PC-9 (cell line): ENCODE measurements at regions of chr11 and their contacts with region 1.

Region 1: GRCh38 chr11:44326615-44327475 is 16.9 kb upstream of the ALX4 start:
- DNase-seq: peak in 1 of 2 experiments; percentile 15
- H3K4me3 ChIP-seq: no peak overlapping the region
- H3K27ac ChIP-seq: no peak overlapping the region
- H3K4me1 ChIP-seq: no peaks in the 10 kb centered on the region
- H3K27me3 ChIP-seq: peaks cover 88% of the 10 kb centered on the region
- CTCF ChIP-seq: no peak

Region 2: DNA sequence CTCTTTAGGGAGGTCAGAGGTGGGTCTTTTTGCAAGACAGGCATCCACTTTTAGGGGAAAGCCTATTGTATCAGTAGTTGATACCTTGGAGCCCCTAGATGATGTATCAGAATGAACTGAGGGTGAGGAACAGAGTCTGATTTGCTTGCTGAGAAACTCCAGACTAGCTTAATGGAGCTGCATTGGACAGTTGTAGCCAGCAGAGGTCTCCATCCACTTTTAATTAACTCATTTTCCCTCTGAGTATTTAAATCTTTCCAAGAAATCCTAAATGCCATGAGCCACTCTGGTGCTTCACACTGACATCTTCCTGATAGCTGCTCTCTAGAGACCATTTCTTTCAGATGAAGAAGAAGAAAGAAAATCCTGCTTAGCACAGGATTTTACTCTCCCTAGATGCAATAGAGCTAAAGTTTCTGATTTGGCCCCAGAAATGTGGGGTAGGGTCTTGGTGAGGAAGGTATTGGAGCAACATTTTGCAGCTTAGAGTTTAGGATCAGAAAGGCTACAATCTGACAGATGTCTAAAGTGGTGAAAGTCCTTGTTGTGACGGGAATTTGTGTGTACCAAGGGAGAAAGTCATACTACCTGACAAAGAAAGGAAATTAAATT is 193.4 kb before region 1 on chr11:
- CTCF ChIA-PET with region 1: no interaction called
- POLR2A ChIA-PET with region 1: no interaction called
- intact Hi-C with region 1: loop called (anchors 2 kb)
- DNase-seq: peak in 1 of 2 experiments; percentile 41
- H3K4me3 ChIP-seq: no peak overlapping the region
- H3K27ac ChIP-seq: no peak overlapping the region
- H3K4me1 ChIP-seq: no peaks in the 10 kb centered on the region
- H3K27me3 ChIP-seq: no peaks in the 10 kb centered on the region
- CTCF ChIP-seq: peak; percentile 89